ENCODE measurements at regions of chr17 and their contacts with region 1.

Region 1: DNA sequence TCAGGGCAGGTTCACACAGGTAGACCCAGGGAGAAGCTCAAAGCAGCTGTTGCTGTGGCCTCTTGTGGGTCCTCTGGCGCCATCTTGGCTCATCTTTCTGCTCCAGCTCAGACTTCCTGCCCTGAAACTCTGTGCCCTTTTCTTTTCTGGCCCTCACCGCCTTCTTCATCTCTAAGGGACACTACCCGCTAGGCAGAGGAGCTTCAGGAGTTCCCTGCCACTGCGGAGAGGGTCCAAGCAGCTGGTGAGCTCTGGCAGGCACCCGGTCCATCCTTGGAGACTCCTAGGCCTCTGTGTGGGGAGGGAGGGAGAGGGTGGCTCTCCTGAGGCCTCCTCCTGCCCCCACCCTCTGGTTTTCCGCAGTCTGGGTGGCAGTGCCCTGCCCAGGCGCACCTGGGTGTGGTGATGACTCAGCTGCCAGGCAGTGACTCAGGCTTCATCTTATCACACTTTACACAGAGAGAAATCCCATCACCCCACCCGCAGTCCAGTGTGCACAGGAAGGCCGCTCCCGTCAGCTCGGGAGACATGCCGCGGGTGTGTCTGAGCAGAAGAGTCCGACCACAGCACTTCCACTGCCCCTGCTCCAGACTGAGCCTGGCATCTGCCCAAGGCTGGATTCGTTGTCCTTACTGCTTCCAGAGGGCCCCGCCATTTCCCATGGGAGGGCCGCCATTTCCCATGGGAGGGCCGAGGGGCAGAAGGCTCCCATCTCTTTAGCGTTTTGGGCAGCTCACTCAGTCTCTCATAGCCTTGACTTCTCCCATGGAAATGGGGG is 7.3 kb downstream of the NT5C start:
- DNase-seq: peak; percentile 99
- ATAC-seq: peak; percentile 90
- H3K4me3 ChIP-seq: peak overlapping the region; percentile 44 to 55
- H3K27ac ChIP-seq: peak overlapping the region; percentile 93
- H3K4me1 ChIP-seq: peaks cover 40 to 71% of the 10 kb centered on the region in 2 experiments
- H3K27me3 ChIP-seq: no peaks in the 10 kb centered on the region
- CTCF ChIP-seq: 0 out of 6 replicates have a peak, but pooled peaks of 1 of the 3 experiments have one; percentile 3
- POLR2A ChIP-seq: peak; percentile 77
- RAD21 ChIP-seq: no peak

Region 2: GRCh38 chr17:75154195-75155106 is 30.2 kb after region 1 on chr17 and contains the start of gene JPT1:
- CTCF ChIA-PET with region 1: no interaction called
- POLR2A ChIA-PET with region 1: interaction called, 16 read pairs
- RAD21 ChIA-PET with region 1: no interaction called
- intact Hi-C with region 1: no loop called
- DNase-seq: peak; percentile 100
- ATAC-seq: peak; percentile 94
- H3K4me3 ChIP-seq: peak within 1 kb of the TSS; percentile 88 to 96
- H3K27ac ChIP-seq: peak within 1 kb of the TSS; percentile 94
- H3K4me1 ChIP-seq: peaks cover 61 to 64% of the 10 kb centered on the region in 2 experiments
- H3K27me3 ChIP-seq: no peaks in the 10 kb centered on the region
- CTCF ChIP-seq: no peak
- POLR2A ChIP-seq: peak; percentile 100
- RAD21 ChIP-seq: no peak
- total RNA-seq, gene JPT1: 575 TPM

Region 3: GRCh38 chr17:75199886-75200618 is 75.8 kb after region 1 on chr17:
- CTCF ChIA-PET with region 1: interaction called, 10 read pairs
- POLR2A ChIA-PET with region 1: interaction called, 6 read pairs
- RAD21 ChIA-PET with region 1: no interaction called
- intact Hi-C with region 1: loop called (anchors 2 kb)
- DNase-seq: no peak
- ATAC-seq: no peak
- H3K4me3 ChIP-seq: no peak overlapping the region
- H3K27ac ChIP-seq: peak overlapping the region; percentile 62
- H3K4me1 ChIP-seq: peaks cover 20 to 37% of the 10 kb centered on the region in 2 experiments
- H3K27me3 ChIP-seq: no peaks in the 10 kb centered on the region
- CTCF ChIP-seq: no peak
- POLR2A ChIP-seq: no peak
- RAD21 ChIP-seq: no peak